Left cardiac atrium (tissue), 4 donors: ENCODE measurements at regions of chr17 and their contacts with region 1.

Region 1: GRCh38 chr17:40362696-40363110 is 1.8 kb downstream of the GJD3 start:
- DNase-seq: peak; percentile 72
- ATAC-seq: peak; percentile 29 to 35

Region 2: DNA sequence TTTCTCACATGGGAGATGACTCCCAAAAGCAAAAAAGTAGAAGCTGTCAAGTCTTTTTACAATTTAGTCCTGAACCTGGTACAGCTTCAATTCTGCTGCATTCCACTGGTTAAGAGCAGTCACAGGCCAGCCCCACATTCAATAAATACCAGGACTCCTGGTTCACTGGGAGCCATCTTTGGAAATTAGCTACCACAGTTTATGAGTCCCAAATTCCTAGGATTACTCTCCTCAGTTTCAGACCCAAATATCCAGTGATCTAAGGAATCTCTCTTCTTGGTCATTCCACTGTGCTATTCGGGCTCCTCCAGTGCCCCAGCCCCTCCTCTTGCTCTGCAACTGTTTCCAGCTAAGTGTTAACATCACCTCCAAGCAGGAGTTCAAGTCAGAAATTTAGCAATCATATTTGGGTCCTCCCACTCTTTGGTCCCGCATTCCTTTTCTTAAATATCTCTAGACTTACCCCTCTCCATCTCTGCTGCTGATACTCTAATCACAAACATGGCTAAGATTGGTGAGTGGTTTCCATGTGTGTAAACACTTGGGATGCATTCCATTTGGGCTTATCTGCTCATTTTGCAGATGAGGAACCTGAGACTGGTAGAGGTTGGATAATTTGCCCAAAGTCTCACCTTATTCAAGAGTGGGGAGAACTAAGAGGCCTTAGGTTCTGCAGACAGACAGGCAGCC is 153.2 kb before region 1 on chr17:
- intact Hi-C with region 1: loop called in 1 of 2 experiments (anchors 10 kb)
- DNase-seq: no peak
- ATAC-seq: peak in 1 of 2 donors; percentile 38

Region 3: DNA sequence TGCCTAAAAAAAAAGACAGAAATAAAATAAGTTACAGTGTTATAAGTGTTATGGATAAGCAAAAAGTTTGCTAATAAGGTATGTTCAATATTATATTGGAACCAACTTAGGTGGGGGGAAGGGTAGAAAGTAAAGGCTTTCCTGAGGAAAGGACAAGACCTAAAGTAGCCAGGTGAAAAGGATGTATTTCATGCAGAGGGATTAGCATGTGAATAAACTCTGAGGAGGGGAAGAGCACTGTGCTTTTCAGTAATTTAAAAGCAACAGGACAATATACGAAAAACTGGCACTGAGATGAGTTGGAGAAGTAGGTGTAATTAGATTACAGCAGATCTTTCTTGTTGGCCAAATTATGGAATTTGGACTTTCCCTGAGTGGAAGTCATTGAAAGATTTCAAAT is 47.4 kb after region 1 on chr17:
- intact Hi-C with region 1: loop called (anchors 5 to 10 kb)
- DNase-seq: no peak
- ATAC-seq: no peak

Region 4: GRCh38 chr17:40417609-40418427 is 55.1 kb after region 1 on chr17 and contains the start of gene TOP2A:
- intact Hi-C with region 1: loop called (anchors 5 to 10 kb)
- DNase-seq: peak; percentile 95
- ATAC-seq: peak; percentile 100
- total RNA-seq, gene TOP2A: 0.47 to 4.2 TPM

Region 5: GRCh38 chr17:40433551-40434415 is 71.1 kb after region 1 on chr17:
- intact Hi-C with region 1: no loop called
- DNase-seq: no peak
- ATAC-seq: peak; percentile 14 to 52

Region 6: DNA sequence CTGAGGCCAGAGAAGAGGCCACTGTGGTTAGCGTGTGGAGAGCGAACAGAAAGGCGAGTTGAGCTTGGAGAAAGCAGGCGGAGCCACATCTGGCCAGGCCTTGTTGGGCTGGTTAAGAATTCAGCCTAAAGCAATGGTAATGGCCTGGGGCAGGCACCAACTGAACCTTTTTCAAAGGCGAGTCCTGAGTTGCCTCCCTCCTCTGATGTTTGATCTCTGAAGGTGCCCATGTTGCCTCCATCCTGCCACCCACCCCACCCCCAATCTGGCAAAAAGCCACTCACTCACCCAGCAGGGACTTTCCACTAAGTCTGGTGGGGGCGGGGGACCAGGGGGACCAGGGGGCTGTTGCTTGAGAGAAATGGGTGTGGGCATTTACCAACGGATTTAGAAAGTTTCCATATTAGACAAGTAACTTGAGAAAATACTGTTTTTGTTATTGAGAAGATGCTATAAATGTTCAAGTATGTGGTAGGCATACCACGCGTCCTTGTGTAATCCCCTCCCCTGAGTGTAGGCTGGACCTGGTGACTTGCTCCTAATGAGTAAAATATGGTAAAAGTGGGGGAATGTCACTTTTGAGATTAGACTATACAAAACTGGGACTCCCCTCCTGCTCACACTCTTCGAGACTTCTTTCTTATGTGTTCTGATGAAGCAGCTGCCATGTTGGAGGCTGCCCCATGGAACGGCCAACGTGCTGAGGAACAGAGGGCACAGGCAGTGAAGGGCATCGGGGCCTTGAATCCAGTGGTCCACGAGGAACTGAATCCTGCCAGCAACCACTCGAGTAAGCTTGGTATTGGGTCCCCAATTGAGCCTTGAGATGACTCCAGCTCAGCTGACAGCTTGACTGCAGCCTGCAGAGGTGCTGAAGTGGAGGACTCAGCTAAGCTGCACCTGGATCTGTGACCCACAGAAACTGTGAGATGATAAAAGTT is 168.6 kb after region 1 on chr17:
- intact Hi-C with region 1: loop called in 1 of 2 experiments (anchors 1 kb)
- DNase-seq: peak; percentile 23
- ATAC-seq: no peak

Region 7: GRCh38 chr17:40559954-40560591 is 197.4 kb after region 1 on chr17:
- intact Hi-C with region 1: loop called in 1 of 2 experiments (anchors 2 kb)
- DNase-seq: peak; percentile 89
- ATAC-seq: peak; percentile 81 to 84